ENCODE measurements at regions of chr9 and their contacts with region 1.

Region 1: DNA sequence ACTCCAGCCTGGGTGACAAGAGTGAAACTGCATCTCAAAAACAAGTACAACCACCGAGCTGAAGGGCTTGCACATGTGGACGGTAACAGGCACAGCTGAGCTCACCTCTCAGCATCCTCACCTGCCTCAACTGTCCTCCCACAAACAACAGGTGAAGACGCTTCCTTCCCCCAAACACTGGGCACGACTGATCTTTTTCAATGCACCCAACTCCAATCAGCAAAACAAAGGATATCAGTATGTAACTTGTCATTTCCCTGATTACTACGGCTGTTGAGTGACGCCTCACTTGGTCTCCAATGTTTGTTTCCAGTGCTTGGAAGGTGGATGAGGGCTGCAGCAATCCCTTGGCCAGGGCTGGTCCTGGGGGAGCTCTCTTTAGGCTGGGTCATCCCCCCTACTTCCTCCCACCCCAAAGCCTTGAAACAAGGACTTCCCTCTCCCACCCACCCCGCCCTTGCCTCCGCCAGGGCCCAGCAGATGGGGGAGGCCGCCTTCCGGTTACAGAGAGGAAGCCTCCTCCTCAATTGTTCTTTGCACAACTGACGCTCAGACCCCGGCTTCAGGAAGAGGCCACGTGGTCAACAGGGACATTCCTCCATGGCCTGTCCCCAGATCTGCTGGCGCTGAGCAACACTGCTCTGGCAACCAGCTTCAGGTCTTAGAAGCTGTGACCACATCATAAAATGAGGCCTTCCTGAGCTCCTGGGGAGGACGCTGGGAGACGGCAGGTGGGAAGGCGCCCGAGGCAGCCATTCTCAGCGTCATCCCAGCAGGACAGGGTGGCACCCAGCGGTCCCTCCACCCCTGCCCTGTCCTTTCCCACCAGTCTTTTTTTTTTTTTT is 5.9 kb downstream of the FAM78A start:
- DNase-seq: peak; percentile 89 to 91 (median 90)
- ATAC-seq: peak; percentile 46 to 69 (median 58)
- H3K4me3 ChIP-seq: peak overlapping the region in 8 of 12 donors; percentile 8 to 45 (median 15)
- H3K27ac ChIP-seq: peak overlapping the region; percentile 88 to 99 (median 98)
- H3K4me1 ChIP-seq: peaks cover 23 to 95% (median 75%) of the 10 kb centered on the region in 12 donors
- H3K27me3 ChIP-seq: no peaks in the 10 kb centered on the region
- CTCF ChIP-seq: no peak
- POLR2A ChIP-seq: peak in 1 of 2 donors; percentile 5

Region 2: GRCh38 chr9:131237931-131238401 is 32.4 kb before region 1 on chr9:
- intact Hi-C with region 1: loop called in 5 of 10 experiments (anchors 2 to 5 kb)
- DNase-seq: peak; percentile 69 to 87 (median 82)
- ATAC-seq: peak; percentile 36 to 65 (median 64)
- H3K4me3 ChIP-seq: peak overlapping the region in 5 of 12 donors; percentile 1 to 35 (median 19)
- H3K27ac ChIP-seq: peak overlapping the region; percentile 62 to 96 (median 85)
- H3K4me1 ChIP-seq: peaks cover 0 to 58% (median 39%) of the 10 kb centered on the region in 12 donors
- H3K27me3 ChIP-seq: no peaks in the 10 kb centered on the region
- CTCF ChIP-seq: no peak
- POLR2A ChIP-seq: no peak

Region 3: DNA sequence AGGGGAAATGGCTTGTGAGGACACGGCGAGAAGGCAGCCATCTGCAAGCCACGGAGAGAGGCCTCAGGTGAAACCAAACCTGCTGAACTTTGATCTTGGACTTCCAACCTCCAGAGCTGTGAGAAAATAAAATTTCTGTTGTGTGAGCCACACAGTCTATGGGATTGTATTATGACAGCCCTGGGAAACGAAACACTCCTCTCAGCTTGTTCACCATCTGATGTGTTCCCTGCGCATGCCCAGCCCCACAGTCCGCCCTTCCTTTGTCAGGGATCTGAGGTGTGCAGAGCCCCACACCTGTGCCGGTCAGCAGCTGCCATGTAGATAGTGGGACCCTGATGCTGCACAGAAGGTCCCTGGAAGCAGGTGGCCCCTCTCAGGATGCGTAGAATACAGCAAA is 53.2 kb after region 1 on chr9:
- intact Hi-C with region 1: no loop called
- DNase-seq: peak in 3 of 5 donors; percentile 4 to 17 (median 16)
- ATAC-seq: no peak
- H3K4me3 ChIP-seq: no peak overlapping the region
- H3K27ac ChIP-seq: no peak overlapping the region
- H3K4me1 ChIP-seq: peaks cover 0 to 22% (median 9%) of the 10 kb centered on the region in 12 donors
- H3K27me3 ChIP-seq: no peaks in the 10 kb centered on the region
- CTCF ChIP-seq: no peak
- POLR2A ChIP-seq: no peak